Mucosa of descending colon (tissue), 3 donors: ENCODE measurements at regions of chr1 and their contacts with region 1.

Region 1: DNA sequence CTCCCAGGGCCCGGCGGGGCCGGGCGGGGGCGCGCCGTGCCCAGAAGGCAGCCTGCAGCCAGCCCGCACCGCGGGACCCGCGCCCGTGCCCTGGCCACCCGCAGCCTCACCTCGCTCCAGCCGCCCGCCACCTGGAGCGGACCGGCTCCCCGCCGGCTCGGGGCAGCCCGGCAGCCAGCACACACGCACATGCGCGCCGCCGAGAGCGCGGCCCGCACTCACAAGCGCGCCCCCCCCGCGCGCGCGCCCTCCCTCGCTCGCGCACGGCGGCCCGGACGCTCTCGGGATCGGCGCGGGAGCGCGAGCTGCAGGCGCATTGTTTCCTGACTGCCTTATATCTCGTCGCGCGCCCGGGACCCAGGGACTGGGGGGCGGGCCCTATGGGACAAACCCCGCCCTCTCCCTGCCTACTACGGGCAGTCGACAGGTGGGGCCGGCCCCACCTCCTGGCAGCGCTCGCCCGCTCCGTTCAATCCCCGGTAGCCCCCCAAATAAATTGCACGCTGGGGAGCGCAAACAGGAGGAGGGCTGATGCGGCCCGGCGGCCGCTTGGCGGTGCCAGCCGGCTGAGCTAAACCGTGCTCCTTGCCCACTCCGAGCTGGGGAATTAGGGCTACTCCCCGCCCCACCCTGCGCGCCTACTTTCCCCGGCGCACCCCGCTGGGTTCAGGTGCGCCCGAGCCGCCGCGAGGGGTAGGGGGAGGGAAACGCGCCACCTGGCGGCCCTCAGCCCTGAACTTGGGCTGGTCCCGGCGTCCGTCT is at the start of gene MYCL:
- DNase-seq: peak; percentile 92 to 95 (median 94)
- ATAC-seq: peak; percentile 92
- H3K4me3 ChIP-seq: peak within 1 kb of the TSS; percentile 50
- H3K4me1 ChIP-seq: peaks cover 24% of the 10 kb centered on the region
- CTCF ChIP-seq: peak; percentile 78
- total RNA-seq, gene MYCL: 4.2 to 17.2 (median 9.4) TPM

Region 2: DNA sequence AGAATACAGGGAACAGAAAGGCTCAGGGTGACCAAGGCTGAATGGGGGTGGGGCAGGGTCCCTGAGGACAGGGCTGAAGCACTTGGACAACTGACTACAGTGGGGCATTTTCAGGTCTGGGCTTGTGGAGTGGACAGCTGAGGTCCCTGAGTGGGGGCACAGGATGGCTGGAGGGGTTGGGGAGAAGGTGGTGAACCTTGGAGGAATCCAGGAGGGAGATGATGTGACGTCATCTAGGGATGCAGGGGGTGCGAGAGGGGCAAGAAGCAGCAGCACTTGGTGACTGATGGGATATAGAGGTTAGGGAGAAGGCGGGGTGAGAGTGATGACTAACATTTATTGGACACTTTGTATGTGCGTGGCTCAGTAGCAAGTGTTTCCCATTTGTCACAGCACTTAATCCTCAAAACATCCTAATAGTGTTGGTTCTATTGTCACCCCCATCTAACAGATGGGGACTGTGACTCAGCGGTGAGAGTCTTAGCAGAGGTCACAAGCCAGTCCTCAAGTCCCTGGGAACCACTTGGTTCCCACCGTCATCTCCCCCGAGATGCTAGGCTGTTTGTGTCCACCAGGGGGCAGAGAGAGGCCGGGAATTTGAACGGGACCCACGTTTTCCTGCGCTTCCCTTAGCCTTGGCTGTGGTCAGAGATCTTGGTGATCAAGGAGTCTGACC is 85.3 kb before region 1 on chr1:
- intact Hi-C with region 1: loop called in 1 of 2 experiments (anchors 5 kb)
- DNase-seq: peak; percentile 71 to 86 (median 77)
- ATAC-seq: peak; percentile 80
- H3K4me3 ChIP-seq: no peak overlapping the region
- H3K4me1 ChIP-seq: peaks cover 24% of the 10 kb centered on the region
- CTCF ChIP-seq: peak; percentile 81